ENCODE measurements at regions of chr20 and their contacts with region 1.

Region 1: DNA sequence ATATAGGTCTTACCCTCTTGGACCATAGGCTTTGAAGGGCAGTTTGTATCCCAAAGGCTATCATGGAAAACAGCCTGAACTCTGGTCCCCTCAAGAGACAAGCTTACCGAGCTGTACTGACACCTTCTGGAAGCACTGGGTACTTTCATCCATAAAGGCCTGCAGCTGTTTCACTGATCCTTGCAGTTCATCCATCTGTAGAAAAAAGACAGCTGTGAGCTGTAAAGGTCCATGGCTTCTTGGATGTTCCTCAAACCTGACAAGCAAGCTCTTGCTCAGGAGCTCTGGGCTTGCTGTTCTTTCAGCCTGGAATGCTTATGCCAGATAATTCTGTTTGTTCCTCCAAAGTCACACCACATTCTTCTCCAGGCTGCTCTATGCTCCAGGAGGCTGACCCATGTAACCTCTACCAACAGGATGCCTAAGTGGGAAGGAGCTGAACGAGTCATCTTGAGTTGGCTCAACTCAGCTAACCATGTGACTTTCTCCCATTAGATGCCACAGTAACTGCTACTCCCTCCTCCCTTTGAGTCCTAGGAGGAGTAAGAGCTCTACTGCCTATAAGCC is 8.8 kb upstream of the NDRG3 start:
- DNase-seq: peak; percentile 67
- ATAC-seq: peak; percentile 75
- H3K4me3 Mint-ChIP-seq: no peak overlapping the region
- H3K27ac Mint-ChIP-seq: no peak overlapping the region
- H3K4me1 Mint-ChIP-seq: peaks cover 16% of the 10 kb centered on the region
- H3K27me3 Mint-ChIP-seq: no peaks in the 10 kb centered on the region

Region 2: GRCh38 chr20:36605399-36606157 is 149.2 kb before region 1 on chr20 and contains the start of gene RAB5IF:
- CTCF ChIA-PET with region 1: interaction called, 22 read pairs
- POLR2A ChIA-PET with region 1: no interaction called
- DNase-seq: peak; percentile 100
- ATAC-seq: peak; percentile 95
- H3K4me3 Mint-ChIP-seq: peak within 1 kb of the TSS; percentile 98
- H3K27ac Mint-ChIP-seq: peak within 1 kb of the TSS; percentile 98
- H3K4me1 Mint-ChIP-seq: peaks cover 28% of the 10 kb centered on the region
- H3K27me3 Mint-ChIP-seq: no peaks in the 10 kb centered on the region
- total RNA-seq, gene RAB5IF: 108 to 109 TPM

Region 3: GRCh38 chr20:36613974-36614373 is 140.8 kb before region 1 on chr20:
- CTCF ChIA-PET with region 1: interaction called, 25 read pairs
- POLR2A ChIA-PET with region 1: no interaction called
- DNase-seq: no peak
- ATAC-seq: no peak
- H3K4me3 Mint-ChIP-seq: no peak overlapping the region
- H3K27ac Mint-ChIP-seq: peak overlapping the region; percentile 52
- H3K4me1 Mint-ChIP-seq: peaks cover 27% of the 10 kb centered on the region
- H3K27me3 Mint-ChIP-seq: no peaks in the 10 kb centered on the region

Region 4: DNA sequence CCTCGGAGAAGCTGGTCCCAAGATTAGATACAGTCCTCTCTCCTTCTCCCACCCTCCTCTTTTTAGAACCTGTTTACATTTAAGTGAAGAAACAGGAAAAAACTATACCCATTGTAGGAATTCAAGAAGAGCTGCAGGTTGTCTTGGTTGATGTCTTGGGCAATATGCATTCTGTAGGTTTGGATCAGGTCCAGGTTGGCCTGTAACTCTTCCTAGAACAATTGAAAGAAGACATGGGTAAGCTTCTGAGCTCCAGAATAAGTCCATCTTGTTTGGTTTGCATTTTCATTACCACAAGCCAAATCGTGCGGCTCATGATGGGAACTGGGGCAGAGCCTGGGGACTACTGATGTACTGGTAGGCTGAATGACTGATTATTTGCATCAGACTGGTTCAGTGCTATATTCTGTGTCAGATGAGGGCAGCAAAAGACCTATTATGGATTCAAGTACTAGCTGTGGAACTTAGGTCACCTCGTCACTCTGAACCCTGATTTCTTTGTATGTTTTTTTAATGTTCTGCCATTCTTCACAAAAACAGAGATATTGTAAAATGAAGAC is 88.5 kb before region 1 on chr20:
- CTCF ChIA-PET with region 1: interaction called, 30 read pairs
- POLR2A ChIA-PET with region 1: no interaction called
- DNase-seq: no peak
- ATAC-seq: peak; percentile 61
- H3K4me3 Mint-ChIP-seq: no peak overlapping the region
- H3K27ac Mint-ChIP-seq: no peak overlapping the region
- H3K4me1 Mint-ChIP-seq: peaks cover 6% of the 10 kb centered on the region
- H3K27me3 Mint-ChIP-seq: no peaks in the 10 kb centered on the region

Region 5: DNA sequence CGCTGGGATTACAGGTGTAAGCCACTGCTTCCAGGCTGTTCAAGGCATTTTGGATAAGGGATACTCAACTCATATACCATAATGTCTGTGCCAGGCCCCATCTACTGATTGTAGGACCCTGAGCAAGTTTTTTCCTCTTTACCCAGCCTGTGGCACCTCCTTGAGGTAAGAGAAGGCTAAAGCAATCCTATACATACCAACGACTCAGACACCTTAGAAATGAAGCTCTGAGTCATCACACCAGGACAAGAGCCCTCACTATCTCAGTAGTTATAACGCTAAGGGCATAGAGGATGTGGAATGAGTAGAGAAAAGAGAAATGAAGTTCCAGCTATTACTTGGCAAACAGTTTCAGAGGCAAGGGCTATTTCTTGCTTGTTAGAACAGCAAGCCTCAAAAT is 25.8 kb before region 1 on chr20:
- CTCF ChIA-PET with region 1: interaction called, 18 read pairs
- POLR2A ChIA-PET with region 1: no interaction called
- DNase-seq: peak; percentile 36
- ATAC-seq: peak; percentile 63
- H3K4me3 Mint-ChIP-seq: no peak overlapping the region
- H3K27ac Mint-ChIP-seq: no peak overlapping the region
- H3K4me1 Mint-ChIP-seq: peaks cover 32% of the 10 kb centered on the region
- H3K27me3 Mint-ChIP-seq: no peaks in the 10 kb centered on the region

Region 6: GRCh38 chr20:36861875-36862801 is 107.4 kb after region 1 on chr20:
- CTCF ChIA-PET with region 1: interaction called, 12 read pairs
- POLR2A ChIA-PET with region 1: no interaction called
- DNase-seq: no peak
- ATAC-seq: no peak
- H3K4me3 Mint-ChIP-seq: peak overlapping the region; percentile 49
- H3K27ac Mint-ChIP-seq: no peak overlapping the region
- H3K4me1 Mint-ChIP-seq: peaks cover 15% of the 10 kb centered on the region
- H3K27me3 Mint-ChIP-seq: peaks cover 24% of the 10 kb centered on the region

Measured in activated CD8-positive, alpha-beta T cell treated with anti-CD3 and anti-CD28 coated beads, Interleukin-2, amount 10 ng/mL, durations not matched to agents 7 days and 5 days (primary cell).